ENCODE measurements at regions of chr20 and their contacts with region 1.

Region 1: DNA sequence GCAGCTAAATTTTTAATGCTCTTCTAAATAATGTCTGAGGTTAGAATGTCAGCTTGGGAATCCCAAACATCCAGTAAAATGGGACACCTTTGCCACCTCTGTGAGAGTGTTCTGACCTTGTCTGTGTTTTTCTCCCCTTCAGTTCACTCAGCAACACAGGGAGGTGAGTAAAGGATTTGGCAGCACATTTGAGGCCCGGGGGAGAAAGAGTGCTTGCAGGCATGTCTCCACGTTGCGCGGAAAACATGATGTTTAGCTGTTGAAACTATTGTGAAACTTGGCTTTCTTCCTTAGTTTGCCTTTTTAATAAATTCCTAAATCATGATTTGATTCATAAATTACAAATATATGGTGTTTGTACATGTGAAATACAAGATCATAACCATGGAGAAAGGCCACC is 707.8 kb upstream of the FLRT3 start:
- DNase-seq: peak; percentile 89
- H3K4me3 Mint-ChIP-seq: peak overlapping the region; percentile 49
- H3K27ac Mint-ChIP-seq: peak overlapping the region; percentile 92
- H3K4me1 Mint-ChIP-seq: peaks cover 37% of the 10 kb centered on the region
- H3K27me3 Mint-ChIP-seq: no peaks in the 10 kb centered on the region
- CTCF ChIP-seq: no peak

Region 2: GRCh38 chr20:14712302-14712739 is 332.9 kb before region 1 on chr20:
- CTCF ChIA-PET with region 1: no interaction called
- POLR2A ChIA-PET with region 1: interaction called, 11 read pairs
- intact Hi-C with region 1: no loop called
- DNase-seq: peak; percentile 35
- H3K4me3 Mint-ChIP-seq: no peak overlapping the region
- H3K27ac Mint-ChIP-seq: peak overlapping the region; percentile 86
- H3K4me1 Mint-ChIP-seq: peaks cover 26% of the 10 kb centered on the region
- H3K27me3 Mint-ChIP-seq: no peaks in the 10 kb centered on the region
- CTCF ChIP-seq: no peak

Region 3: DNA sequence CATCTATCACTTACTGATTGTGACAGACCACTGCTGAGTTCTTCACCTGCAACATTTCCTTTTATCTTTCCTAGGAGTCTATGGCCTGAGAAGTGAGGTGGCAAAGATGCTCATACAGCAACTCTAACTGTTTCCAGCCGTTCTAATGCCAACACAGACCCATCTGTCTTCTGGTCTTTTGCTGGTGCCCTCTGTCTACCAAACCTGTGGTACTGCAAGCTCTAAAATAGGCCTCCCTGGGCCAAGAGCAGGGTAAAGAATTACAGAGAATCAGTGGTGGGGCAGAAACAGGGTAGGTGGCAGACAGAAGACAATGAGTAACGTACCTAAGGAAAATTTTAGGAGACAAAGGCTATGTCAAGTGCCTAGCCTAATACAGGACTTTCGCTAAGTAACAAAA is 96.8 kb before region 1 on chr20:
- CTCF ChIA-PET with region 1: no interaction called
- POLR2A ChIA-PET with region 1: interaction called, 11 read pairs
- intact Hi-C with region 1: no loop called
- DNase-seq: peak; percentile 14
- H3K4me3 Mint-ChIP-seq: no peak overlapping the region
- H3K27ac Mint-ChIP-seq: no peak overlapping the region
- H3K4me1 Mint-ChIP-seq: peaks cover 14% of the 10 kb centered on the region
- H3K27me3 Mint-ChIP-seq: no peaks in the 10 kb centered on the region
- CTCF ChIP-seq: peak; percentile 24

Region 4: GRCh38 chr20:14979453-14979986 is 65.7 kb before region 1 on chr20:
- CTCF ChIA-PET with region 1: interaction called, 3 read pairs
- POLR2A ChIA-PET with region 1: interaction called, 13 read pairs
- intact Hi-C with region 1: no loop called
- DNase-seq: no peak
- H3K4me3 Mint-ChIP-seq: no peak overlapping the region
- H3K27ac Mint-ChIP-seq: no peak overlapping the region
- H3K4me1 Mint-ChIP-seq: no peaks in the 10 kb centered on the region
- H3K27me3 Mint-ChIP-seq: no peaks in the 10 kb centered on the region
- CTCF ChIP-seq: no peak

Region 5: GRCh38 chr20:15061955-15062354 is 16.7 kb after region 1 on chr20:
- CTCF ChIA-PET with region 1: interaction called, 40 read pairs
- POLR2A ChIA-PET with region 1: interaction called, 231 read pairs
- intact Hi-C with region 1: no loop called
- DNase-seq: peak; percentile 76
- H3K4me3 Mint-ChIP-seq: peak overlapping the region; percentile 0
- H3K27ac Mint-ChIP-seq: peak overlapping the region; percentile 5
- H3K4me1 Mint-ChIP-seq: peaks cover 26% of the 10 kb centered on the region
- H3K27me3 Mint-ChIP-seq: no peaks in the 10 kb centered on the region
- CTCF ChIP-seq: no peak

Measured in MCF 10A (cell line).